Activated CD4-positive, alpha-beta T cell treated with anti-CD3 and anti-CD28 coated beads for 36 hours (primary cell): ENCODE measurements at regions of chr12 and their contacts with region 1.

Region 1: DNA sequence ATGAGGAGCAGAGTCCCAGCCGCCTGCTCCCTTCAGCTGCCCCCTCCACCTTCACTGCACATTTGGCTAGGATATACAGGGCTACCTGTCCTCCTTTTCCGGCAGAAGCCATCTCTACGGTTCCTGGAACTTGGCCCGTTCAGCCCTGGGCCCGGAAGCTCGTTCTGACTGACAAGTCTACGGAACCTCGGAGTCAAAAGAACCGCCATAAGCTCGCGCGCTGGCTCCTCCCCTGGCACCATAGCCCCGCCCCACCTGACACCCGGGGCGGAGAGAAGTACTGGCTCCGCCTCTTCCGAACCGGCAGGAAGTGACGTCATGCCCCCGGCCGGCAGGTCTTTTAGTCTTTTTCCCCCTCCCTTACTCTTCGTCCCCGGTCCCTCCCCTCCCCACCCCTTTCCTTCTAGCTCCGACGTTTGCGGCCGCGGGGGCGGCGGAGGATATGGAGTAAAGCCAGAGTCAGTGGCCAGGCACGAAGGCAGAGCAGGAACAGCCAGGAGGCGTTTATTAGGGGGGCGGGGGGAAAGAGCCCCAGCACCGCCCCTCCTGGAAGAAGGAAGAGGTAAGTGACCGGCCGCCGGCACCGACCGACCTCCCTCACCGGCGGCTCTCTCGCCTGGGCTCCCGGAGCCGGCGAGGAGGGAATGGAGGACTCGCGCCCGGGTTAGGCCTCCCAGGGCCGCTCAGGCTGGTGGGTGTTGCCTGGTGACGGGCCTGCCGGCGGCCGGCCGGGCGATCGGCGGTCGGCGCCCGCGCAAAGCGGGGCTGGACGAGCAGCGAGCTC is at the starts of genes DEPDC4 and SCYL2:
- DNase-seq: peak; percentile 97
- ATAC-seq: peak; percentile 95
- H3K4me3 Mint-ChIP-seq: peak within 1 kb of the TSS; percentile 82
- H3K27ac Mint-ChIP-seq: peak within 1 kb of the TSS; percentile 95
- H3K4me1 Mint-ChIP-seq: peaks cover 23% of the 10 kb centered on the region
- H3K27me3 Mint-ChIP-seq: no peaks in the 10 kb centered on the region
- total RNA-seq, gene DEPDC4: 2.9 to 4.2 TPM
- total RNA-seq, gene SCYL2: 25.9 to 29.3 TPM

Region 2: GRCh38 chr12:98503592-98504367 is 1763.2 kb before region 1 on chr12:
- CTCF ChIA-PET with region 1: no interaction called
- POLR2A ChIA-PET with region 1: no interaction called
- intact Hi-C with region 1: loop called in 1 of 2 experiments (anchors 5 kb)
- DNase-seq: peak; percentile 98
- ATAC-seq: peak; percentile 85
- H3K4me3 Mint-ChIP-seq: peak overlapping the region; percentile 84
- H3K27ac Mint-ChIP-seq: peak overlapping the region; percentile 99
- H3K4me1 Mint-ChIP-seq: peaks cover 37% of the 10 kb centered on the region
- H3K27me3 Mint-ChIP-seq: peaks cover 2% of the 10 kb centered on the region

Region 3: DNA sequence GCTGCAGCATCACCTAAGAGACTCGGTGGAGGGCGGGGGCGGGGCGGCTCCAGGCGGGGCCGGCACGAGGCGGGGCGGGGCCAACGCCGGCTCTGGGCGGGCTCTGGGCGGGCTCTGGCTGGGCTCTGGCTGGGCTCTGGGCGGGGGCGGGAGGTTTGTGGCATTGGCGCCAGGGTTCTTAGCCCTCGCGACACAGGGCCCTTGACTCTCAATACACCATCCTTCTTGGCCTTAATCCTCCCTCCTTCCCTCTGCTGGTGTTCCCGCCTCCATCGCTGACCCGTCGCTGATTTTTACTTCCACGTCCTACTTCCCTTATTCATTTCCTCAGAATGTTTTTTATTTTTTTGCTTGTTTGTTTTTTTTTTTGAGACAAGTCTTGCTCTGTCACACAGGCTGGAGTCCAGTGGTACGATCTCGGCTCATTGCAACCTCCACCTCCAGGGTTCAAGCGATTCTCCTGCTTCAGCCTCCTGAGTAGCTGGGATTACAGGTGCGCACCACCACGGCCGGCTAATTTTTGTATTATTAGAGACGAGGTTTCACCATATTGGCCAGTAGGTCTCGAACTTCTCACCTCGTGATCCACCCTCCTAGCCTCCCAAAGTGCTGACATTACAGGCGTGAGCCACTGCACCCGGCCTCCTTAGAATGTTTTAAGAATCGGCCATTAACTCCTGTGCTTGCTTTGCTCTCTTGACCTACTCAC is 124.0 kb before region 1 on chr12 and contains the start of gene BLTP3B:
- CTCF ChIA-PET with region 1: interaction called, 5 read pairs
- POLR2A ChIA-PET with region 1: no interaction called
- intact Hi-C with region 1: loop called (anchors 1 to 2 kb)
- DNase-seq: peak; percentile 96
- ATAC-seq: peak; percentile 82
- H3K4me3 Mint-ChIP-seq: peak within 1 kb of the TSS; percentile 94
- H3K27ac Mint-ChIP-seq: peak within 1 kb of the TSS; percentile 97
- H3K4me1 Mint-ChIP-seq: peaks cover 33% of the 10 kb centered on the region
- H3K27me3 Mint-ChIP-seq: no peaks in the 10 kb centered on the region
- total RNA-seq, gene BLTP3B: 39.5 to 48.7 TPM

Region 4: GRCh38 chr12:100573292-100574186 is 306.5 kb after region 1 on chr12 and contains the start of gene GAS2L3:
- CTCF ChIA-PET with region 1: no interaction called
- POLR2A ChIA-PET with region 1: no interaction called
- intact Hi-C with region 1: loop called in 1 of 2 experiments (anchors 1 kb)
- DNase-seq: peak; percentile 80
- ATAC-seq: peak; percentile 92
- H3K4me3 Mint-ChIP-seq: peak within 1 kb of the TSS; percentile 88
- H3K27ac Mint-ChIP-seq: peak within 1 kb of the TSS; percentile 87
- H3K4me1 Mint-ChIP-seq: peaks cover 16% of the 10 kb centered on the region
- H3K27me3 Mint-ChIP-seq: peaks cover 29% of the 10 kb centered on the region
- total RNA-seq, gene GAS2L3: 2.6 to 3.9 TPM

Region 5: GRCh38 chr12:101407436-101408345 is 1140.7 kb after region 1 on chr12 and contains the start of gene ARL1:
- CTCF ChIA-PET with region 1: no interaction called
- POLR2A ChIA-PET with region 1: no interaction called
- intact Hi-C with region 1: loop called in 1 of 2 experiments (anchors 1 kb)
- DNase-seq: peak; percentile 91
- ATAC-seq: peak; percentile 83
- H3K4me3 Mint-ChIP-seq: peak within 1 kb of the TSS; percentile 95
- H3K27ac Mint-ChIP-seq: peak within 1 kb of the TSS; percentile 95
- H3K4me1 Mint-ChIP-seq: peaks cover 15% of the 10 kb centered on the region
- H3K27me3 Mint-ChIP-seq: no peaks in the 10 kb centered on the region
- total RNA-seq, gene ARL1: 67.2 to 85.6 TPM